GM12878 (cell line): ENCODE measurements at regions of chr12 and their contacts with region 1.

Region 1: GRCh38 chr12:51923501-51924271 is 16.4 kb downstream of the ACVRL1 start:
- DNase-seq: no peak
- ATAC-seq: peak; percentile 84
- H3K4me3 ChIP-seq: no peak overlapping the region
- H3K27ac ChIP-seq: no peak overlapping the region
- H3K4me1 ChIP-seq: peaks cover 35% of the 10 kb centered on the region
- H3K27me3 ChIP-seq: no peaks in the 10 kb centered on the region
- CTCF ChIP-seq: peak; percentile 71 to 86 (median 78)
- EP300 ChIP-seq: no peak
- POLR2A ChIP-seq: no peak
- RAD21 ChIP-seq: 0 out of 2 replicates have a peak, but pooled peaks have one; percentile 8

Region 2: DNA sequence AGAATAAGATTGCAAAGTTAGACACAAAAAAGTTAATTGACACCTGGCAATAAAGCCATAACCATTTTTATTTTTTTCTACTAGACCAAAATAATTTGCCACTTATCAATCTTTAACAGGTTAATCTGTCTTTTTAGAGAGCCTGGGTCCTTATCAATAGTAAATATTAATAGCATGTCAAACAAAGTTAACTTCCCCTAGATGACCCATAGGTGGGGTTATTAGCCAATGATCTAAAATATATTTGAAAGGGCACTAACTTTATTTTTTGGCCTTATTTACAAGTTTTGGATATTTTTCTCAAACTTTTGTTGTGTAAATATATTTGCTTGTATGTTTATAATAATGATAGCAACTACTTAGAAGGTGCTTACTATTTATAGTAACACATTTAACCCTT is 31.8 kb before region 1 on chr12:
- CTCF ChIA-PET with region 1: interaction called, 12 read pairs
- POLR2A ChIA-PET with region 1: no interaction called
- RAD21 ChIA-PET with region 1: no interaction called
- SMC1A ChIA-PET with region 1: interaction called, 3 read pairs
- in situ Hi-C with region 1: no loop called
- intact Hi-C with region 1: no loop called
- DNase-seq: no peak
- ATAC-seq: peak; percentile 46; the same call in 1 of the 3 replicates
- H3K4me3 ChIP-seq: no peak overlapping the region
- H3K27ac ChIP-seq: no peak overlapping the region
- H3K4me1 ChIP-seq: no peaks in the 10 kb centered on the region
- H3K27me3 ChIP-seq: 0 out of 4 replicates have a peak, but pooled peaks cover 0 to under 1% of the 10 kb centered on the region in 2 experiments
- CTCF ChIP-seq: peak in 2 of 3 experiments; percentile 13 to 40; a peak in 2 of 6 replicates
- EP300 ChIP-seq: no peak
- POLR2A ChIP-seq: no peak
- RAD21 ChIP-seq: peak; percentile 36; the same call in 1 of the 2 replicates